Calu3 (cell line): ENCODE measurements at regions of chr5 and their contacts with region 1.

Region 1: DNA sequence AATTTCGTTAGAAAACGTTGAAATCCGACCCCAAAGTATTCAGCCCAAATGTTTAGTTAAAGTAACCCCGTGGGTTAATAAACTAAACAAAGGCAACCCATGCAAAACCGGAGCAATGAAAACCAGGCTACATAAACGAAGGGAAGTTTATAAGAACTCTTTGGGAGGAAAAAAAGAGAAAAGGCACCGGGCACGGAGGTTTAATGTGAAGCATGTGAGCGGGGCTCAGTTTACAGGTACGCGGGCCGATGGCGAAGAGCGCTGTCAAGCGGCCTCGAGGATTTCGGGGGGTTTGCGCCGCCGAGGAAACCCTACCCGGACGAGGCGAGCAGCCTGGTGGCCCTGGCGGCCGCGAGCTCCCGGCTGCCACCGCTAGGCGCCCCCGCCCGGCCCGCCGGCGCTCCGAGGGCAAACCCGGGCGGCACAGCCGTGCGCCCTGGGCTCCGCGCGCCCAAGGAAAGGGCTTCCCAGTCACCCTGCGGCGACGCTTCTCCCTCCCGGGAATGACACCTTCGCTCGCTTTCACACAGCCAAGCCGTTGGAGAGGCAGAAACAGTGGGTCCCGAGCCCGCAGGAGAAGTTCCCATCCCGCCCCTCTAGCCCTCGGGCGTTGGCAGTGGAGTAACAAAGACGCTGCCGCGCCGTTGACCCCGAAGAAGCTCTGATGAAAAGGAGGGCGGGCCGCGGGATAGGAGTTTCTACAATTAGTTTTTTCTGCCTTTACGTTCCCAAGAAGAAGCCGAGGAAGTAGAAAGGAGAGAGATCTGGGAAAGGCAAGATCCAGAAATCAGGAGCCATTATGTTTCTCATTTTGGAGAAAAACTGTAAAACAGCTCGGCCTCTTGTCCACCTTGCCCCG is 126.0 kb downstream of the TMEM174 start:
- DNase-seq: peak; percentile 74
- H3K4me3 Mint-ChIP-seq: peak overlapping the region; percentile 45
- H3K27ac Mint-ChIP-seq: no peak overlapping the region
- H3K4me1 Mint-ChIP-seq: peaks cover 13% of the 10 kb centered on the region
- H3K27me3 Mint-ChIP-seq: peaks cover 97% of the 10 kb centered on the region
- CTCF ChIP-seq: peak; percentile 57

Region 2: GRCh38 chr5:73088026-73088425 is 211.0 kb before region 1 on chr5:
- CTCF ChIA-PET with region 1: no interaction called
- intact Hi-C with region 1: loop called (anchors 10 kb)
- DNase-seq: no peak
- H3K4me3 Mint-ChIP-seq: no peak overlapping the region
- H3K27ac Mint-ChIP-seq: peak overlapping the region; percentile 60
- H3K4me1 Mint-ChIP-seq: peaks cover 25% of the 10 kb centered on the region
- H3K27me3 Mint-ChIP-seq: no peaks in the 10 kb centered on the region
- CTCF ChIP-seq: no peak

Region 3: DNA sequence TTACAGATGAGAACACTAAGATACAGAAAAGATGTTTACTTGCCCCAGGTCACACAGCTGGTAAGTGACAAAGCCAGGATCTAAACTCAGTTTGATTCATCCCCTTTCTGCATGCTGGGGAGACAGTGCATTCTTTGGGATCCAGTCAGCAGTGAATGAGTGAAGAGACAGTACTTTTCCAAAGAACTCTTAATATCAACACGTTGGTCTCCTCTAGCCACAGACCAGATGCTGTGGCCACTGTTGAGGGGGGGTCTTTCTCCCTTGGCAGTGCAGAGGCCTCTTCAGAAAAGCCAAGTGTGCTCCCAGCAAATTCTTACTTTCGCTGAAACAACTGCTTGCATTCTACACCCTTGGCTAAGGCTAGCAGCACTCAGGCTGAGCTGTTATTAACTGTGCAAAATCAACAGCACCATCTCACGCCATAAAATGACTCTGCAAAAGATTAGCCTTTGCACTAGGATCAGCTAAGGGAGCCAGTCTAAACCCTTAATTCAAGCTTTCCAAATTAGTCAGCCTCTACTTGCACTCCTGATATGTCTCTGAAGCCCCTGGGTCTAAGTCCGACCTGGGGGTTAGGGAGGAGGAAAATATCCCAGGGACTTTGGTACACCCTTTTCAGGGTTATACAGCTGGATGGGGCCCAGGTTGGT is 183.5 kb before region 1 on chr5:
- CTCF ChIA-PET with region 1: no interaction called
- intact Hi-C with region 1: loop called (anchors 10 kb)
- DNase-seq: no peak
- H3K4me3 Mint-ChIP-seq: no peak overlapping the region
- H3K27ac Mint-ChIP-seq: no peak overlapping the region
- H3K4me1 Mint-ChIP-seq: peaks cover 76% of the 10 kb centered on the region
- H3K27me3 Mint-ChIP-seq: no peaks in the 10 kb centered on the region
- CTCF ChIP-seq: no peak

Region 4: DNA sequence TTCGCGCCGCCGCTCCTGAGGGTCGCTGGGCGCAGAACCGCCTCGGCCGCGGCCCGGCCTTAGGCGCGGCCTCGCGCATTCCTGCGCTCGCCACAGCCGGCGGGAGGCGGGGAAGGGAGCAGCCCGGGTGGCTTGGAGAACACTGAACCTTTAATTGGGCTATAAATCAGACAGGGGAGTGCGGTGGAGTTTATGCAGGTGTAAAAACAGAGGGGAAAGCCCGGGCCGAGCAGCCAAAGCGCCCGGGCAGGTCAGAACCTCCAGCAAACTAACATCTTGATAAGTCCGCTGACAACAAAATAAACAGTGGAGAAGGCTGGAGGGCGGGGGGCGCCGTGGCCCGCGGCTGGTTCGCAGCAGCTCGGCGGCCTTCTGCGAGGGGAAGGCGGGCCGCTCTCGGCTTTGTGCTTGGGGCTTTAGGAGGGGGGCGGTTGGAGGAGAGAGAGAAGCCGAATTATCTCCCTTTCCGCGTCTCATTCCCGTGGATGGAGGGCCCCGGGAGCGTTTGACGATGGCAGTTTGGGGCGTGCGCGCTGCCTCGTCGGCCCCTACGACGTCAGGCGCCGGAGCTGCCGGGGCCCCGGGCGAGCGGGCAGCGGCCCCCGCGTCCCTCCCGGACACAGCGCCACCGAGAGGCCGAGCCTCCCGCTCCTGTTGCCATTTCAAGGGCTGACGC is 138.2 kb after region 1 on chr5:
- CTCF ChIA-PET with region 1: no interaction called
- intact Hi-C with region 1: loop called (anchors 10 kb)
- DNase-seq: peak; percentile 86
- H3K4me3 Mint-ChIP-seq: peak overlapping the region; percentile 75
- H3K27ac Mint-ChIP-seq: peak overlapping the region; percentile 12
- H3K4me1 Mint-ChIP-seq: peaks cover 8% of the 10 kb centered on the region
- H3K27me3 Mint-ChIP-seq: peaks cover 56% of the 10 kb centered on the region
- CTCF ChIP-seq: peak; percentile 60

Region 5: DNA sequence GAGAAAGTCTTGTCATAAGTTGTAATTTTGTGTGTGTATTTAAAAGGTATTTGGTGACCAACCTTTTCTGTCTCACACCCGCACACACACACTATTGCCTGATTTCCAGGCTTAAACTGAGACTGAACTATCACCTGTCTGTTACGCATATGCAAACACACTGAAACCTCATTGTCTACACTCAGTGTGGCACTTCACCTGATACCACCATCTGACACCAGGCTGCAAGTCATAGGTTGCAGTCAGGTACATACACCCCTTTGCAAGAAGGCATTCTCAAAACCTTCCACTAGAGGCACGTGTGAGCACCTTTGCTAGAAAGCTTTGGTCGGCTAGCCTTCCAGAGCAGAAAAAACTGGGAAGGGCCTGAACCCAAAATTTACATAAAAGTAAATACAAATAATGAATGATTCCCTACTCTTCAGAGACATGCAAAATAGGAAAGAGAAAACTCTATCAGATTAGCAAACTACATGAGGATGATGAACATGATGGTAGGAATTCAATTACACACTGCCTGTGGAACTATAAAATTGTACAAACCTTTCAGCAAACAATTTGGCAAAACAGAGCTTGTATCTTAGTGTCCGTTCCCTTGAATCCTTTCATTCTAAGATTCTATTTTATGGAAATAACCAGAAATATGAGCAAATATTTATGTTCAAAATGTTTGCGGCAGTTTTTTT is 155.5 kb after region 1 on chr5:
- CTCF ChIA-PET with region 1: interaction called, 6 read pairs
- intact Hi-C with region 1: loop called (anchors 5 kb)
- DNase-seq: peak; percentile 83
- H3K4me3 Mint-ChIP-seq: no peak overlapping the region
- H3K27ac Mint-ChIP-seq: no peak overlapping the region
- H3K4me1 Mint-ChIP-seq: peaks cover 10% of the 10 kb centered on the region
- H3K27me3 Mint-ChIP-seq: peaks cover 43% of the 10 kb centered on the region
- CTCF ChIP-seq: peak; percentile 58

Region 6: DNA sequence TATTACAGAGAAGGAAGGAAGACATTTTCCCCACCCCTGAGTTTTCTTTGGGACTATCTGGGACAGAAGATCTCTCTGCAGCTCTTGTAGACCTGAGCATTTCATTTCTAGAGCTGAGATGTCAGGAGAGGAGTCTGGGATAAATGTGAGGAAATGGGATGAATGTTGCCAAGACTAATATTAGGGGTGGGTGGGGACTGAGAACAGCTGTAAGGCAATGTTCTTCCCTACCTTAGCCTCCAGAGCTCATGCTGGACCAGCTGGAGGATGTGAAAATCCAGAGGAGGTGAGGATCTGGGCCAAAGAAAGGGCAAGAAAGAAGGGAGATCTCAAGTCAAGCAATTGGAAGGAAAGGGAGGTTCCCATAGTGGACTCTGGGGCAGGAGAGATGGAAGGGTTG is 172.7 kb after region 1 on chr5:
- CTCF ChIA-PET with region 1: no interaction called
- intact Hi-C with region 1: no loop called
- DNase-seq: no peak
- H3K4me3 Mint-ChIP-seq: no peak overlapping the region
- H3K27ac Mint-ChIP-seq: no peak overlapping the region
- H3K4me1 Mint-ChIP-seq: no peaks in the 10 kb centered on the region
- H3K27me3 Mint-ChIP-seq: peaks cover under 1% of the 10 kb centered on the region
- CTCF ChIP-seq: no peak

Region 7: GRCh38 chr5:73605227-73606020 is 306.4 kb after region 1 on chr5:
- CTCF ChIA-PET with region 1: no interaction called
- intact Hi-C with region 1: no loop called
- DNase-seq: peak; percentile 55
- H3K4me3 Mint-ChIP-seq: peak overlapping the region; percentile 49
- H3K27ac Mint-ChIP-seq: peak overlapping the region; percentile 94
- H3K4me1 Mint-ChIP-seq: peaks cover 45% of the 10 kb centered on the region
- H3K27me3 Mint-ChIP-seq: no peaks in the 10 kb centered on the region
- CTCF ChIP-seq: no peak